HepG2 (cell line): ENCODE measurements at regions of chr17 and their contacts with region 1.

Region 1: GRCh38 chr17:7186241-7186640 is 7.1 kb upstream of the ASGR1 start:
- DNase-seq: peak; percentile 61
- ATAC-seq: peak; percentile 58
- H3K4me3 ChIP-seq: no peak overlapping the region
- H3K27ac ChIP-seq: no peak overlapping the region
- H3K4me1 ChIP-seq: peaks cover 63% of the 10 kb centered on the region
- H3K27me3 ChIP-seq: no peaks in the 10 kb centered on the region
- CTCF ChIP-seq: peak; percentile 78
- EP300 ChIP-seq: no peak
- POLR2A ChIP-seq: no peak
- RAD21 ChIP-seq: peak; percentile 73; the same call in 1 of the 2 replicates

Region 2: GRCh38 chr17:7167832-7168231 is 18.4 kb before region 1 on chr17:
- CTCF ChIA-PET with region 1: no interaction called
- POLR2A ChIA-PET with region 1: interaction called, 16 read pairs
- in situ Hi-C with region 1: no loop called
- intact Hi-C with region 1: no loop called
- DNase-seq: peak; percentile 56
- ATAC-seq: peak; percentile 16; the same call in 1 of the 3 replicates
- H3K4me3 ChIP-seq: no peak overlapping the region
- H3K27ac ChIP-seq: peak overlapping the region; percentile 49
- H3K4me1 ChIP-seq: peaks cover 62% of the 10 kb centered on the region
- H3K27me3 ChIP-seq: no peaks in the 10 kb centered on the region
- CTCF ChIP-seq: no peak
- EP300 ChIP-seq: no peak
- POLR2A ChIP-seq: no peak
- RAD21 ChIP-seq: no peak

Region 3: DNA sequence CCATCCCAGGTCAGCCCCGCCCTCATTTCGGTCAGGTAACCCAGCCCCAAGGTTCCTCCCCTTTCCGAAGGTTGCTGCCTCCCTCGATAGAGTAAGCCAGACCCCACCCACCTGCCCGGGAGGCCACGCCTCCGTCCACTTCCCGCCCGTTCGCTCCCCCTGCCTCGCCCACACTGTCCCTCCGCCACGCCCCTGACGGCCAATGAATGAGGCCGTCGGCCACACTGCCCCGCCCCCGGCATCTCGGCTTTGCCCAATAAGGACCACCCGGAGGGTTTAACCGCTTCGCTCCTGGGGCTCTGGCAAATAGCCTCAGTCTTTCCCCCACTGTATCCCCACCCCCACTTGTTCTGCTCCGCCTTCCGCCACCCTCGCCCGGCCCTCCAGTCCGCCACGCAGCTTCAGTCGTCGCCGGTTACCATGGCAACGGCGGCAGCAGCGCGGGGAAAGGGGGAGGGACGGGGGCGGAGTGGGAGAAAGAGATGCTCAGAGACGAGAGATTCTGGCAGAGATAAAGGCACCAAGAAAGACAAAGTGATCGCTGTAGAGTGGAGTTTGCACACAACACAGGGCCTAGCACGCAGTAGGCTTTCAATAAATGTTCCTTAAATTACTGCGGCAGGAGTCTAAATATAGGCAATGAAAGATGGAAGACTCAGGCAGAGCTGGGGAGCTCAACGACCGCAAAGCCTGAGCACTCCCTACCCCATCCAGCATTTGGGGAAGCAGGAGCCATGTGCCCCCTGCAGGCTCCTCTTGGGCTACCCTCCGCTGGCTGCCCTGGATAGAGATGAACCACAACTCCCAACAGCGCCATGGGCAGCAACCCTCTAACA is 28.3 kb after region 1 on chr17:
- CTCF ChIA-PET with region 1: no interaction called
- POLR2A ChIA-PET with region 1: interaction called, 24 read pairs
- in situ Hi-C with region 1: no loop called
- intact Hi-C with region 1: no loop called
- DNase-seq: peak; percentile 95
- ATAC-seq: peak; percentile 88
- H3K4me3 ChIP-seq: peak overlapping the region; percentile 29 to 68 (median 55)
- H3K27ac ChIP-seq: peak overlapping the region; percentile 53
- H3K4me1 ChIP-seq: peaks cover 56% of the 10 kb centered on the region
- H3K27me3 ChIP-seq: peaks cover 0 to 4% of the 10 kb centered on the region in 2 experiments; a peak in 2 of 5 replicates
- CTCF ChIP-seq: peak; percentile 79
- EP300 ChIP-seq: no peak
- POLR2A ChIP-seq: no peak
- RAD21 ChIP-seq: peak; percentile 56

Region 4: GRCh38 chr17:7219812-7220581 is 33.8 kb after region 1 on chr17 and contains the starts of genes ACADVL and DLG4:
- CTCF ChIA-PET with region 1: no interaction called
- POLR2A ChIA-PET with region 1: interaction called, 24 read pairs
- in situ Hi-C with region 1: no loop called
- intact Hi-C with region 1: no loop called
- DNase-seq: peak; percentile 75
- ATAC-seq: peak; percentile 85
- H3K4me3 ChIP-seq: peak within 1 kb of the TSS; percentile 73 to 93 (median 90)
- H3K27ac ChIP-seq: peak within 1 kb of the TSS; percentile 96
- H3K4me1 ChIP-seq: peaks cover 62% of the 10 kb centered on the region
- H3K27me3 ChIP-seq: peaks cover 0 to 4% of the 10 kb centered on the region in 2 experiments; a peak in 2 of 5 replicates
- CTCF ChIP-seq: 0 out of 2 replicates have a peak, but pooled peaks have one; percentile 8
- EP300 ChIP-seq: no peak
- POLR2A ChIP-seq: peak; percentile 88 to 94
- RAD21 ChIP-seq: peak; percentile 46; the same call in 1 of the 2 replicates
- total RNA-seq, gene ACADVL: 106 and 219 TPM in 2 replicates
- total RNA-seq, gene DLG4: 0.25 and 0.71 TPM in 2 replicates

Region 5: DNA sequence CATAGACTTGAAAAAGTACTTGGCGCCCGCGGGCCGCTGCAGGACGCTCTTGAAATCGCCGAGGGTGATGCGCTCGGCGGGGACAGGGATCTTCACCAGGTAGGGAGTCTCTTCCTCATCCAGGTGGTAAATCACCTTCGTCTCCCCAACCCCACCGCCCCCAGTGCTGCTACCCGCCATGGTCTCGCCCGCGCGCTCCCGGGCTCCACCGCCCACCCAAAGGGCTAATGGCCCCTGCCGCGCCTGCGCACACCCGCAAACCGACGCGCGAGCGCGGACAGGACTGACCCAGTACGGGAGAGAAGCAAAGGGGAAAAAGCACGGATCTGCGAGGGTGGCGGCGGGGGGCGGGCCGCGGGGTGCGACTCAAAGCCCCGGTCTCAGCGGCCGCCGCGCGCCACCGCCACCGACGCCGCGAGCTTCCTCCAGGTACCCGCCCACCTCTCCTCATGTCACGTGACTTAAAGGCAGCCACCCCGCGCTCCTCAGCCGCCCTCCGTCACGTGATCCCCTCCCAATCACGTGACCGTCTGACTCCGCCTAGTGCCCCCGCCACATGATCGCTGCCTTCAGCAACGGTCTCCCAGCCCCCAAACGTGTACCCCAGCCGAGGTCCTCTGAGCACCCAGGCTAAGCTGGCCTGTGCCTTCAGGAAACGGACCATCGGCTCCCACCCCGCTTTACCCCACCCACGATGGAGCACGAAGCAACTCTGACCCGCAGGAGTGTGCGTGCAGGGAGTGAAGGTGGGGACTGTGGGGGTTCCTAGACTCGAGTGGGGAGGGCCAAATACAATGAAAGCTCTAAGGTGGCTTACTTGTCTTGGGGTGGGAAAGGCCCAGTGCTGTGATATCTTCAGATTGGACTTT is 48.1 kb after region 1 on chr17 and contains the start of gene DVL2:
- CTCF ChIA-PET with region 1: no interaction called
- POLR2A ChIA-PET with region 1: no interaction called
- in situ Hi-C with region 1: no loop called
- intact Hi-C with region 1: no loop called
- DNase-seq: peak; percentile 88
- ATAC-seq: peak; percentile 62
- H3K4me3 ChIP-seq: peak within 1 kb of the TSS; percentile 66 to 93 (median 89)
- H3K27ac ChIP-seq: peak within 1 kb of the TSS; percentile 79
- H3K4me1 ChIP-seq: peaks cover 53% of the 10 kb centered on the region
- H3K27me3 ChIP-seq: no peaks in the 10 kb centered on the region; a peak in 1 of 5 replicates
- CTCF ChIP-seq: no peak; the same call in 1 of the 2 replicates
- EP300 ChIP-seq: peak in 1 of 2 experiments; percentile 56; a peak in 2 of 4 replicates
- POLR2A ChIP-seq: peak; percentile 45 to 93; a peak in 3 of 4 replicates
- RAD21 ChIP-seq: peak; percentile 75
- total RNA-seq, gene DVL2: 27.2 and 38.2 TPM in 2 replicates